Mammary epithelial cell (primary cell): ENCODE measurements at regions of chr1 and their contacts with region 1.

Region 1: GRCh38 chr1:89085781-89086180 is 20.8 kb upstream of the GBP1 start:
- DNase-seq: peak; percentile 27
- H3K4me3 ChIP-seq: no peak overlapping the region
- H3K27ac ChIP-seq: no peak overlapping the region
- H3K4me1 ChIP-seq: no peaks in the 10 kb centered on the region
- H3K27me3 ChIP-seq: no peaks in the 10 kb centered on the region
- CTCF ChIP-seq: peak; percentile 80 to 86

Region 2: DNA sequence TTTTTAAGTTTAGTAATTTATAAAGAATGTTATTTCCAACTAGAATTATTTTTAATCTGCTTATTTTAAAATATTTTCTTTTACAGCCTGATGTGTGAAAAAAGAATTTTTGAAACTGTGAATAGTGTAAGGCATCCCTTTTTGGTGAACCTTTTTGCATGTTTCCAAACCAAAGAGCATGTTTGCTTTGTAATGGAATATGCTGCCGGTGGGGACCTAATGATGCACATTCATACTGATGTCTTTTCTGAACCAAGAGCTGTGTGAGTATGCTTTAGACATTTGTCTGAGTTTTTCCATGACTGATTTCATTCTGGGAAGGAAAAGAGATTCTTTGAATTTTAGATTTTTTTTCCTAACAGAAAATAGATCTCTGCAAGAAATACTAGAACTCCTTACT is 272.3 kb before region 1 on chr1:
- CTCF ChIA-PET with region 1: no interaction called
- dilution Hi-C with region 1: no loop called
- in situ Hi-C with region 1: no loop called
- intact Hi-C with region 1: no loop called
- DNase-seq: no peak
- H3K4me3 ChIP-seq: no peak overlapping the region
- H3K27ac ChIP-seq: no peak overlapping the region
- H3K4me1 ChIP-seq: no peaks in the 10 kb centered on the region
- H3K27me3 ChIP-seq: no peaks in the 10 kb centered on the region
- CTCF ChIP-seq: no peak

Region 3: GRCh38 chr1:88998716-88999115 is 87.1 kb before region 1 on chr1:
- CTCF ChIA-PET with region 1: no interaction called
- dilution Hi-C with region 1: no loop called
- in situ Hi-C with region 1: no loop called
- intact Hi-C with region 1: loop called (anchors 1 kb)
- DNase-seq: peak; percentile 60
- H3K4me3 ChIP-seq: no peak overlapping the region
- H3K27ac ChIP-seq: no peak overlapping the region
- H3K4me1 ChIP-seq: peaks cover 12% of the 10 kb centered on the region
- H3K27me3 ChIP-seq: no peaks in the 10 kb centered on the region
- CTCF ChIP-seq: peak; percentile 19 to 49

Region 4: GRCh38 chr1:89261926-89262515 is 176.2 kb after region 1 on chr1:
- CTCF ChIA-PET with region 1: no interaction called
- dilution Hi-C with region 1: no loop called
- in situ Hi-C with region 1: no loop called
- intact Hi-C with region 1: loop called (anchors 10 kb)
- DNase-seq: no peak
- H3K4me3 ChIP-seq: no peak overlapping the region
- H3K27ac ChIP-seq: no peak overlapping the region
- H3K4me1 ChIP-seq: no peaks in the 10 kb centered on the region
- H3K27me3 ChIP-seq: no peaks in the 10 kb centered on the region
- CTCF ChIP-seq: no peak

Region 5: DNA sequence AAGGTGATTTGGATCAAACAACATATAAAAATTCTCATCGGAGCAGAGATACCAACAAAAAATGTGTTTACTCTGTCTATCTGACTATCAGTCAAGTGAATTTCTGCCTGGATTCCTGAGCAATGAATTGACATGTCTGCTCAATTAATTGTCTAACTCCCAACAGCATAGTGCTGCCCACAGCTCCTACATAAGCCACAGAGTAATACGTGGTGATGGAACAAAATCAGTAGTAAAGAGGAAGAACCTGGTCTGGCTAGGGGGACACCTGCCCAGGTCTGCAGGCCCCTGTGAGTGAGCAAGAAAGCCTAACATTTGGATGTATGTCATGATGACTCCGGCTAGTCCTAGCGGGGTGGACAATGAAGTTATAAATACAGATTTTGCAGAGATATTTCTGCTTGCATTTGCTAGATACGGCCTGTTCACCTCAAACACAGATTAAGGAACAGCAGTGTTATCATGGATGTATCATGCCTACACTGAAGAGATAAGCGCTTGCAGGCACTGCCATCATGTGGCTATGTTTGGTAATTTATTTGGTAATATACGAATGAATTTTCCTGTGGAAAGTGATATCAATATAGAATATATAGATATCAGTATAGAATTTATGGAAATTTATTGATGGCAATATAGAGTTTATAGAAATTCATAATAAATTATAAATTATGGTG is 369.2 kb after region 1 on chr1:
- CTCF ChIA-PET with region 1: interaction called, 4 read pairs
- dilution Hi-C with region 1: no loop called
- in situ Hi-C with region 1: loop called (anchors 10 to 25 kb)
- intact Hi-C with region 1: loop called (anchors 1 kb)
- DNase-seq: peak; percentile 66
- H3K4me3 ChIP-seq: no peak overlapping the region
- H3K27ac ChIP-seq: peak overlapping the region; percentile 36
- H3K4me1 ChIP-seq: peaks cover 39% of the 10 kb centered on the region
- H3K27me3 ChIP-seq: no peaks in the 10 kb centered on the region
- CTCF ChIP-seq: peak; percentile 50 to 64

Region 6: GRCh38 chr1:89692601-89693521 is 607.1 kb after region 1 on chr1:
- CTCF ChIA-PET with region 1: interaction called, 11 read pairs
- dilution Hi-C with region 1: no loop called
- in situ Hi-C with region 1: no loop called
- intact Hi-C with region 1: no loop called
- DNase-seq: no peak
- H3K4me3 ChIP-seq: no peak overlapping the region
- H3K27ac ChIP-seq: no peak overlapping the region
- H3K4me1 ChIP-seq: no peaks in the 10 kb centered on the region
- H3K27me3 ChIP-seq: no peaks in the 10 kb centered on the region
- CTCF ChIP-seq: no peak